ENCODE measurements at regions of chr13 and their contacts with region 1.

Region 1: DNA sequence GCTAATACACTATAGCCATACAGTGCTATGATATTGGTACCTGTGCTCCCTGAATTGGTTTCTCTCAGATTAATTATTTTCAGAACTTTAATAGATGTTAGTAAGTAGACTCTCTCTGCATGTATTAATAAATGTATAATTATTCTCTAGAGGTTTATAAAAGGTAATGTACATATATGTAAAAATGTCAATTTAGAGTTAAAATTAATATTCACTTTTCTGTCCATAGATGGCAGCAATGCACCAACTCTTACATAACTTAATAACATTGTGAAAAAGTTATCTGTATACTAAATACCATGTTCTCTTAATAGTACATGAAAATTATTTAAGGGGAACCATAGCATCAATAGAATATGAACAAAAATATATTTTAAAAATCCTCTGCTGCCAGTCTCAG is 515.0 kb upstream of the KLHL1 start:
- DNase-seq: no peak
- ATAC-seq: peak; percentile 51; the same call in 2 of the 3 replicates
- H3K4me3 ChIP-seq: no peak overlapping the region
- H3K27ac ChIP-seq: no peak overlapping the region
- H3K4me1 ChIP-seq: no peaks in the 10 kb centered on the region
- H3K27me3 ChIP-seq: no peaks in the 10 kb centered on the region
- CTCF ChIP-seq: peak in 1 of 3 experiments; percentile 23; a peak in 2 of 6 replicates
- EP300 ChIP-seq: no peak
- POLR2A ChIP-seq: no peak
- RAD21 ChIP-seq: peak; percentile 33; the same call in 1 of the 2 replicates

Region 2: DNA sequence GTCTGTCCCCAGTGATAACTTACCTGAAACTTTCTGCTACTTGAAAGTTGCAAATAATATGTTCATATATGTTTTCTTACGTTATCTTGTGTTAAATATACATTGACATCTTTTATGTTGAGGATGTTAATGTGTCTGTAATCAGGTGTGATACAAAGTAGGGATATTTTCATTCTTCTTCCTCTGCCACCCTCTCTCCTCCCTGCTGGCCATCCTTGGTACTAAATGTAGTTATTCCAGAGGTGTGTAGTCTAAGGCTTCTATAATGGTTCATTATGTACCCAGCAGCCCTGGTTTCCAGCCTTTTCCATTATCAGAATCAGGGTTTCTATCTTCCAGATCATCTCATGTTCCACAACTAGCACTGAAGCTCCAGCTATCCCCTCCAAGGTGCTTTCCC is 91.8 kb after region 1 on chr13:
- CTCF ChIA-PET with region 1: no interaction called
- POLR2A ChIA-PET with region 1: no interaction called
- RAD21 ChIA-PET with region 1: no interaction called
- SMC1A ChIA-PET with region 1: no interaction called
- in situ Hi-C with region 1: no loop called
- intact Hi-C with region 1: no loop called
- DNase-seq: no peak
- ATAC-seq: no peak
- H3K4me3 ChIP-seq: no peak overlapping the region
- H3K27ac ChIP-seq: no peak overlapping the region
- H3K4me1 ChIP-seq: no peaks in the 10 kb centered on the region
- H3K27me3 ChIP-seq: no peaks in the 10 kb centered on the region
- CTCF ChIP-seq: no peak
- EP300 ChIP-seq: no peak
- POLR2A ChIP-seq: no peak
- RAD21 ChIP-seq: no peak

Region 3: DNA sequence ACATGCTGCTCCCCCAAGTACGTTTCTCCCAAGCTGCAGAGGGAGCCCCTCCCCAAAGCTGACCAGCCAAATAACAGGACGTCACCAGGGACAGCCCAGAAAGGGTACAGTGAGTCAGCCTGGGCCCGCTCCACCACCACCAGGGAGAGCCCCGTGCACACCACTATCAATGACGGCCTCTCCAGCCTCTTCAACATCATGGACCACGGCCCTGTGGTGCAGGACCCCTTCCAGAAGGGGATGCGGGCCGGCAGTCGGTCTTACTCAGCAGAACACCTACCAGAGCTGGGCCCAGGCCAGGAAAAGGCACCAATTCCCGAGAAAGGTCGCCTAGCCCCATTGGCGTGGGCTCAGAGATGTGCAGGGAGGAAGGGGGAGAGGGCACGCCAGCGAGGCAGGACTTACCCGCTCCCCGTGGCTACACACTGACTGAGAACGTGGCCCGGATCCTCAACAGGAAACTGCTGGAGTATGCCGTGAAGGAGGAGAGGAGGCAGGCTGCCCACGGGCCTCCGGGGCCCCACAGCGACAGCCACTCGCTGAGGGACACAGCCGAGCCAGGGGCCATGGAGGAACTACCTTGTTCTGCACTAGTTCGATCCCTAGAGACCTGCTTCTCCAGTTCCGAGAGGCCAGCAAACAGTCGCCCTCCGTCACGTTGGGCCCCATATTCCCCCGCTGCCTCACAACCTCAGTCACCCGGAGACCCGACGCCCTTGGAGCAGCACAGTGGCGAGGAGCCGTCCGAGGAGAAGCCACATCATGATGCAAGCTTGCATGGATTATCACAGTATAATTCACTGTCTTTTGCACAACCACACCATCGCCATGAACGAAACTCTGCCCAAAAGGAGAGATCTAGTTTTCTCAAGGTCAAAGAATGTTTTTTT is 300.9 kb after region 1 on chr13:
- CTCF ChIA-PET with region 1: no interaction called
- POLR2A ChIA-PET with region 1: no interaction called
- RAD21 ChIA-PET with region 1: no interaction called
- SMC1A ChIA-PET with region 1: no interaction called
- in situ Hi-C with region 1: no loop called
- intact Hi-C with region 1: no loop called
- DNase-seq: no peak
- ATAC-seq: peak; percentile 31; the same call in 2 of the 3 replicates
- H3K4me3 ChIP-seq: no peak overlapping the region
- H3K27ac ChIP-seq: no peak overlapping the region
- H3K4me1 ChIP-seq: no peaks in the 10 kb centered on the region
- H3K27me3 ChIP-seq: no peaks in the 10 kb centered on the region
- CTCF ChIP-seq: no peak
- EP300 ChIP-seq: no peak
- POLR2A ChIP-seq: no peak
- RAD21 ChIP-seq: no peak

Region 4: DNA sequence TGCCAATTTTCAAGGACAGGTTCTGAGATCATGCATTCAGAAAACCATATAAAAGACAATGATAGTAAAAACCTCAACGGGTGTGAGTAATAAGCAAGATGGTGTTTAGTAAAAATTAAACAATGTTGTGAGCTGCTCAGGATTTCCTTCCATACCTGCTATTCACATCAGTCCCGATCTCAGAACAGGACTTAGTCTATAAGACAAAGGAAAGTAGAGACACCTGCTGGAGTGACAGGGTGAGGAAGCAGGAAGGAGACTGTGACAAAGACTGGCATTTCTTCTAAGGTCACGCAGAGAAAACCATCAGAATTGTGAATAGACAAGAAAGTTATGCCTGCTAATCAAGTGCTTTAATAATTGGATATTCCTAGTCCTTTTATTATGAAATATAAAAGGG is 595.7 kb after region 1 on chr13:
- CTCF ChIA-PET with region 1: no interaction called
- POLR2A ChIA-PET with region 1: no interaction called
- RAD21 ChIA-PET with region 1: no interaction called
- SMC1A ChIA-PET with region 1: no interaction called
- in situ Hi-C with region 1: no loop called
- intact Hi-C with region 1: loop called (anchors 10 kb)
- DNase-seq: no peak
- ATAC-seq: peak; percentile 57
- H3K4me3 ChIP-seq: no peak overlapping the region
- H3K27ac ChIP-seq: no peak overlapping the region
- H3K4me1 ChIP-seq: no peaks in the 10 kb centered on the region; the same call in 1 of the 2 replicates
- H3K27me3 ChIP-seq: no peaks in the 10 kb centered on the region
- CTCF ChIP-seq: peak; percentile 27 to 39 (median 35); a peak in 4 of 6 replicates
- EP300 ChIP-seq: no peak
- POLR2A ChIP-seq: no peak
- RAD21 ChIP-seq: peak; percentile 61